AG04449 (cell line): ENCODE measurements at regions of chr14 and their contacts with region 1.

Region 1: DNA sequence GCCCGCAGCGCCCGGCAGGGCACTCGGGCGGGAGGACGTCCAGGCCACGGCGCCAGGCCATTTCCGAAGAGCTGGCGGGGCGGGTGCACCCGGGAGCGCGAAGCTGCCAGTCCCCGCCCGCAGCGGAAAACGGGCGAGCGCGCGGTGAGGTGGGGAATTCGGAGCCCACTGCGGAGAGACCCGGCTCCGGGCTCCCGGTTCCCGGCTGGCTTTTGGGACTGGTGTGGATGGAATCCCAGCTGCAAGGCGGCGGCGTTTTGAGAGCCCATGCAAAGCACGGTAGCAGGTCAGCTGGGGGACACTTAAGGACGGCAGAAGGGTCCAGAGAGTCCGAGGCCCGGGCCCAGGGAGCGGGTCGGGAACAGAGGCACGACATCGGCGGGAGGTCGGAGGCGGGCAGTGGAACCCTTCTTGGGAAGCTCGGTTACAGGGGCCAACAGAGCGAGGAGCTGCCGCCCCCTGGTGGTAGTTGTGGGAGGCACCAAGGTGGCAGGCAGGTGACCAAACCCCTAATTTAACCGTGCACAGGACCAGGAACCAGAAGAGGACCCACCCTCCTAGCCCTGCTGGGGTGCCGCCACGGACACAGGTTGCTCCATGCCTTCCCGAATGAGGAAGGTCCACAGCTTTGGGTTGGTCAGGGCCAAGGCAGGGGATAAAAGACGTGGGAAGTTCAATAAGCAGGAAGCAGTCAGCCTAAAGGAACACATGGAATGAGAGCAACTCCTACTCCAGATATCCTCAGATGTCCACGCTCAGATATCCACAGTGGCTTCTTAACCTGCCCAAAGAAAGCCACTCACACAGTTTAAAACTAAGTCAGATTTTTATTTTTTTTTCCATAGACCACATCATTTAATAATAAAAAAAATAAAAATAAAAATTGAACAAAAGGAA is 685 bp upstream of the CDH24 start:
- DNase-seq: no peak
- H3K4me3 ChIP-seq: peak overlapping the region; percentile 60
- CTCF ChIP-seq: peak; percentile 94

Region 2: DNA sequence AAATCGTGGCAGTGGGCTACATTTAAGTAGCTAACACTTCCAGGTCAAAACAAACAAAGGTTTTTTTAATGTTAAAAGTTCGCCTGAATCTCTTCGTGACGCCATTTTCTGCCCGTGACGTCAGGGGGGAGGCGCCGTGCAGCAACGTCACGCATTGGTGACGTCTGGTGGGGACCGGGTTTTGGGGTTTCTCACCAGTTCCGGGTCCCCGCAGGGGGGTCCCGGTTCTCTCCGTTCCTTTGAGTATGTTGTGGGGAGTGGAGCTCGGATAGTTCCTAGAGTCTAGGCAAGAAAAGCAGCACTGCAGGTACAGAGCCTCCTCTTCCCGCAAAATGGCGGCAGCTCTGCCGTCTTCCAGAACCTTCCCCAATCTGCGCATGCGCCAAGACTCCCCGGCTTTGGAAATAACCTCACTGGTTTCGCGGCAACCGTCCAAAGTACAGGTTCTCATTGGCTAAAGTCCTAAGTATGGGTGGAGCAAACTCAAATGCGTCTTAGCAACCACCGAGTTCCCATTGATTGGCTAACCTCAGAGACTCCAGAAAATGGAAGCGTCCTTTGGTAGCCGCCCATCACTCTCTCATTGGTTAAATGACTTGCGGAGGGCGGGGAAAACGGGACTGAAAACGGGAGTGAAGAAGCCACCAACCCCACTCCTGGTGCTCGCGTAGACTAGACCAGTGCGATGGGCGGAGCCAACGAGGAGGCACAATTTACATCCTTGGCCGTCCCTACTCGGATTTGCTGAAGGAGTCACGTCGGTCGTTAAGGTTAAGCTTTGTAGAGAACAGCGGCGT is 139.0 kb before region 1 on chr14 and contains the start of gene RBM23:
- CTCF ChIA-PET with region 1: interaction called, 12 read pairs
- POLR2A ChIA-PET with region 1: interaction called, 3 read pairs
- DNase-seq: peak; percentile 99
- H3K4me3 ChIP-seq: peak within 1 kb of the TSS; percentile 76
- CTCF ChIP-seq: no peak

Region 3: GRCh38 chr14:23006544-23007419 is 51.2 kb before region 1 on chr14:
- CTCF ChIA-PET with region 1: interaction called, 1,423 read pairs
- POLR2A ChIA-PET with region 1: interaction called, 4 read pairs
- DNase-seq: peak; percentile 86
- H3K4me3 ChIP-seq: peak overlapping the region; percentile 70
- CTCF ChIP-seq: peak; percentile 54

Region 4: DNA sequence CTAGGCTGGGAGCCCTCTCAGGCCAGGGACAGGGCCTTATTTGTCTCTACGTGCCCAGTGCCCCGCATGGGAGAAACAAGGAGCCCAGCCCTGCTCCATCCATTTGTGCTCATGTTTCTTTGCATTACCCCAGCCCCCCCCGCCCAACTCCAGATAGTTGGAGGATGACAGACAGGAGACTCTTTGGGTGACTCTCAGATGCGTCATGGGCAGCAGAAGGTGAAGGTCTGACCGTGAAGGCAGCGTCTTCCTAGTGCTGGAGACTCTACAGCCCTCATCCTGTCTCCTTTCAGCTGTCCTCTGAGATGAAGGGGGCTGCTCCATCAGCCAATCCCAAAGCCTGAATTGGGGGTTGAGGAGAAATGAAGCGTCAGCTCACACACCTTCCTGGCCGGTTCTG is 16.3 kb before region 1 on chr14:
- CTCF ChIA-PET with region 1: interaction called, 37 read pairs
- POLR2A ChIA-PET with region 1: no interaction called
- DNase-seq: no peak
- H3K4me3 ChIP-seq: no peak overlapping the region
- CTCF ChIP-seq: no peak

Region 5: GRCh38 chr14:23095196-23096108 is 37.4 kb after region 1 on chr14 and contains the start of gene C14orf119:
- CTCF ChIA-PET with region 1: interaction called, 10 read pairs
- POLR2A ChIA-PET with region 1: interaction called, 7 read pairs
- DNase-seq: peak; percentile 95
- H3K4me3 ChIP-seq: peak within 1 kb of the TSS; percentile 100
- CTCF ChIP-seq: no peak